WTC11 (cell line): ENCODE measurements at regions of chr3 and their contacts with region 1.

Region 1: DNA sequence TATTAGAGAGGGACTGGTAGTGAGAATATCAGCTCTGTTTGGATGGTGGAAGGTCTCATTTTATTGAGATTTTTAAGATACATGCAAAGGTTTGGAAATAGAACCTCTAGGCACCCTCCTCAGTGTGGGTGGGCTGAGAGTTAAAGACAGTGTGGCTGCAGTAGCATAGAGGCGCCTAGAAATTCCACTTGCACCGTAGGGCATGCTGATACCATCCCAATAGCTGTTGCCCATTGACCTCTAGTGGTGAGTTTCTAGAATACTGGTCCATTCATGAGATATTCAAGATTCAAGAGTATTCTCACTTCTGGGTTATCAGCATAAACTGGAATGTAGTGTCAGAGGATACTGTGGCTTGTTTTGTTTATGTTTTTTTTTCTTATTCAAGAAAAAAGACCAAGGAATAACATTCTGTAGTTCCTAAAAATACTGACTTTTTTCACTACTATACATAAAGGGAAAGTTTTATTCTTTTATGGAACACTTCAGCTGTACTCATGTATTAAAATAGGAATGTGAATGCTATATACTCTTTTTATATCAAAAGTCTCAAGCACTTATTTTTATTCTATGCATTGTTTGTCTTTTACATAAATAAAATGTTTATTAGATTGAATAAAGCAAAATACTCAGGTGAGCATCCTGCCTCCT is 87.2 kb downstream of the TGFBR2 start:
- DNase-seq: peak; percentile 35
- ATAC-seq: peak; percentile 90
- H3K4me3 Mint-ChIP-seq: no peak overlapping the region
- H3K27ac Mint-ChIP-seq: no peak overlapping the region
- H3K4me1 Mint-ChIP-seq: peaks cover 69% of the 10 kb centered on the region
- H3K27me3 Mint-ChIP-seq: no peaks in the 10 kb centered on the region
- CTCF ChIP-seq: peak; percentile 57

Region 2: GRCh38 chr3:30319713-30320112 is 373.9 kb before region 1 on chr3:
- CTCF ChIA-PET with region 1: interaction called, 12 read pairs
- POLR2A ChIA-PET with region 1: no interaction called
- DNase-seq: peak; percentile 25
- ATAC-seq: peak; percentile 98
- H3K4me3 Mint-ChIP-seq: no peak overlapping the region
- H3K27ac Mint-ChIP-seq: no peak overlapping the region
- H3K4me1 Mint-ChIP-seq: no peaks in the 10 kb centered on the region
- H3K27me3 Mint-ChIP-seq: no peaks in the 10 kb centered on the region
- CTCF ChIP-seq: no peak; the same call in 1 of the 2 replicates